ENCODE measurements at regions of chr1 and their contacts with region 1.

Region 1: DNA sequence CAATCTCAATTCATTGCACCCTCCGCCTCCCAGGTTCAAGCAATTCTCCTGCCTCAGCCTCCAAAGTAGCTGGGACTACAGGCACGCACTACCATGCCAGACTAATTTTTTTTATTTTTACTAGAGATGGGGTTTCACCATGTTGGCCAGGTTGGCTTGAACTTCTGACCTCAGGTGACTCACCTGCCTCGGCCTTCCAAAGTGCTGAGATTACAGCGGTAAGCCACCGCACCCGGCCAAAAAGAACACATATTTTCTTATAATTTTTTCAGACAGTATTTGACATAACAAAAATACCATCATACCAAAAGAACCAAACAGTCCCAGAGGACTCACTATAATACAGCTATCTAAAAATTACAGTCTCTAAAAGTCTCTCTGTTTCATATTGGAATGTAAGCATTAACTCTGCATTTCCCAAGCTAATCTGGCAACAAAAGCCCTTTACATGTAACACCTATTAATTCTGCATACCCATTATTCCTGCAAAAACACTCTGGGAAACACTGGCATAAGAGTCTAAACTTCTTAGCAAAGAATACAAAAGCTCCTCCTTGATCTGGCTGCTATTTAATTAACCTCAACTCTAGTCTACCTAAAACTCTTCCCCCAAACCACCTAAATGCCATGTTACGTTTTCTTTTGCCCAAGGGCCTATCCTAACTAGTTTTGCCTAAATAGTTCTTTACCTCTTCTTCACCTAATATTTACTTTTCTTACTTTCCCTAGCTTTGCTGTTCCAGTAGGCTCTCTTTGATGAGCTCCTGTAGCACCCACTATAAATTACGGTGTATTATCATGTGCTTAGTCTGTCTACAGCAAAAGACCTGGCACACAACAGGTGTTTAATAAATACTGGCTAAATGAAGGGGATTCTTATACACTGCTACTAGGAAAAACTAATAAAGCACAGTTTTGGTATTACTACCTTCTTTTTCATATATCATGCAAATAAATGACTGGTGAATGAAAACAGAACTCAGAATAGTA is 26.7 kb downstream of the WDR26 start:
- DNase-seq: peak; percentile 77
- H3K4me3 ChIP-seq: no peak overlapping the region
- H3K27ac ChIP-seq: no peak overlapping the region
- H3K4me1 ChIP-seq: peaks cover 9% of the 10 kb centered on the region
- H3K27me3 ChIP-seq: no peaks in the 10 kb centered on the region
- CTCF ChIP-seq: no peak

Region 2: GRCh38 chr1:224127925-224128819 is 279.7 kb before region 1 on chr1:
- CTCF ChIA-PET with region 1: no interaction called
- dilution Hi-C with region 1: no loop called
- in situ Hi-C with region 1: no loop called
- intact Hi-C with region 1: no loop called
- DNase-seq: peak; percentile 39
- H3K4me3 ChIP-seq: no peak overlapping the region
- H3K27ac ChIP-seq: peak overlapping the region; percentile 4
- H3K4me1 ChIP-seq: peaks cover 13% of the 10 kb centered on the region
- H3K27me3 ChIP-seq: no peaks in the 10 kb centered on the region
- CTCF ChIP-seq: no peak

Region 3: DNA sequence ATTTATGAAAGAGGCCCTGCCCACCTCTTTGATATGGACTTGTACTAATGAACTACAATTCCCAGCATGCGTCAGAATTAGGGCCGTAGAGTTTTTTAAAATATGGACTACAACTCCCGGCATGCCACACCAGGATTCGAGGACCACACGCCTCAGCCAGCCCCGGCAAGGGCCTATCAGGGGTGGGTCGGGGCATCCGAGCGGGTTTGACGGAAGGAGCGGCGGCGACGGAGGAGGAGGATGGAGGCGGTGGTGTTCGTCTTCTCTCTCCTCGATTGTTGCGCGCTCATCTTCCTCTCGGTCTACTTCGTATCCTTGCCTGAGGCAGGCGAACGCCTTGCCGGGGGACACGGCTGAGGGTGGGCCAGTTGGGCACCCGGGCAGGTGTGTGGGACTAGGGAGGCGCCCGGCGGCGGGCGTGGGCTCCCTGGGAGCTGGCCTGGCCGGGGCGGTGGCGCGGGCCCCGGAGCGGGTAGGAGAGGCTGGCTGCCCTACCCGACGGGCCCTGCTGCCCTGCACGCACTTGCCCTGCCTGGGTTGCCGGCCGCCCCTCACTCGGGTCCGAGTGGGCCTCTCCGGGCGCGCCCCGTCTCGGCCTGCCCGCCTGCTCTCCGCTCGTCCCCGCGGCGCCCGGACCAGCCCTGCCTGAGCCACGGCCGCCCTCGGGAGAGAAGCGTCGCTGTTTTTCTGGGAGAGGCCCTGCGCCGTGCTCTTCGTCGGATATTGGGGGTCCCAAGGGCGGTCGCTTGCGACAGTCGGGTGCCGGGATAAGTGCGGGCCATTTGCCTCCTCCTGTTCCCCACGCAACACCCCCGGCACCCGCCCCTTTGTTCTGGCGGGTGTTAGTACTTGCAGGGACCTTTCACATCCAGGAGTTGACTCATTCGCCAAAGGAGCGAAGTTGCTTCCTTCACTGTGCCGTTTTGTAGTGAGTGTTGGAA is 50.9 kb before region 1 on chr1 and contains the start of gene CNIH4:
- CTCF ChIA-PET with region 1: no interaction called
- dilution Hi-C with region 1: loop called (anchors 5 kb)
- in situ Hi-C with region 1: no loop called
- intact Hi-C with region 1: no loop called
- DNase-seq: peak; percentile 94
- H3K4me3 ChIP-seq: peak within 1 kb of the TSS; percentile 71 to 94 (median 90)
- H3K27ac ChIP-seq: peak within 1 kb of the TSS; percentile 54
- H3K4me1 ChIP-seq: peaks cover 15% of the 10 kb centered on the region
- H3K27me3 ChIP-seq: no peaks in the 10 kb centered on the region
- CTCF ChIP-seq: no peak
- total RNA-seq, gene CNIH4: 82.2 to 82.3 TPM

Region 4: GRCh38 chr1:224425279-224425884 is 17.5 kb after region 1 on chr1:
- CTCF ChIA-PET with region 1: no interaction called
- dilution Hi-C with region 1: no loop called
- in situ Hi-C with region 1: no loop called
- intact Hi-C with region 1: no loop called
- DNase-seq: no peak
- H3K4me3 ChIP-seq: no peak overlapping the region
- H3K27ac ChIP-seq: no peak overlapping the region
- H3K4me1 ChIP-seq: peaks cover 12% of the 10 kb centered on the region
- H3K27me3 ChIP-seq: no peaks in the 10 kb centered on the region
- CTCF ChIP-seq: no peak

Region 5: GRCh38 chr1:224448453-224449017 is 40.7 kb after region 1 on chr1:
- CTCF ChIA-PET with region 1: interaction called, 11 read pairs
- dilution Hi-C with region 1: no loop called
- in situ Hi-C with region 1: no loop called
- intact Hi-C with region 1: no loop called
- DNase-seq: no peak
- H3K4me3 ChIP-seq: no peak overlapping the region
- H3K27ac ChIP-seq: no peak overlapping the region
- H3K4me1 ChIP-seq: peaks cover 30% of the 10 kb centered on the region
- H3K27me3 ChIP-seq: no peaks in the 10 kb centered on the region
- CTCF ChIP-seq: no peak

Region 6: DNA sequence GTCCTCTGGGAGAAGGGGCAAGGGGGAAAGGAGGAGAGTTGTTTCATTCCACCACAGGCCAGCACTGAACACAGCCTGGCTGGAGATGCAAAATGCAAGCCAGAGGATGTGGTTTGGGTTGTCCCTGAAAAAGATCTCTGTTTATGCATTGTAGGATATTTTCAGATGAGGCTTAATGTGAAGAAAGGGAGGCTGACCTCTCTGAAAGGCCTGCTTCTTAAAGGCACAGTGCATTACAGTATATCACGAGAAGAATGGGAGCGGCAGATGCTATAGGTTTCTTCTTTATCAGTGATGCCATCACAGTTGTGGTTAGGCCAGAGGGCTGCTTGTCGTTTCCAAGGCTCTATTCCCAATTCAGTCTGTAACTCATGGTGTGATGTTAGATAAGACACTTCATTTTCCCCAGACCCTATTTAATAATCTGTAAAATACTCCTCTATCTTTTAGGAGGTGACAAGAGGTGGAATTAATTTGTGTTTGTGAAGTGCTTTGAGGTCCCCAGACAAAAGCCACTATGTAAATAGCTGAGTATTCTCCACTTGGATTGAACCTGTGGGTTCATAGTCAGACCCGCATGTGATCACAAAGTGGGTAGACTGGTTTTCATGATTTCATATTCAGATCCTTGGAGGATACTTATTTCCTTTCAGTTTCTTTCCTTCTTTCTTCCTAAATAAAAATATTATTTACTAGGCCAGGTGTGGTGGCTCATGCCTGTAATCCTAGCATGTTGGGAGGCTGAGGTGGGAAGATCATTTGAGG is 103.2 kb after region 1 on chr1:
- CTCF ChIA-PET with region 1: no interaction called
- dilution Hi-C with region 1: no loop called
- in situ Hi-C with region 1: no loop called
- intact Hi-C with region 1: no loop called
- DNase-seq: no peak
- H3K4me3 ChIP-seq: no peak overlapping the region
- H3K27ac ChIP-seq: no peak overlapping the region
- H3K4me1 ChIP-seq: peaks cover 16% of the 10 kb centered on the region
- H3K27me3 ChIP-seq: no peaks in the 10 kb centered on the region
- CTCF ChIP-seq: no peak

Measured in mammary epithelial cell (primary cell).